ENCODE measurements at regions of chr7 and their contacts with region 1.

Region 1: DNA sequence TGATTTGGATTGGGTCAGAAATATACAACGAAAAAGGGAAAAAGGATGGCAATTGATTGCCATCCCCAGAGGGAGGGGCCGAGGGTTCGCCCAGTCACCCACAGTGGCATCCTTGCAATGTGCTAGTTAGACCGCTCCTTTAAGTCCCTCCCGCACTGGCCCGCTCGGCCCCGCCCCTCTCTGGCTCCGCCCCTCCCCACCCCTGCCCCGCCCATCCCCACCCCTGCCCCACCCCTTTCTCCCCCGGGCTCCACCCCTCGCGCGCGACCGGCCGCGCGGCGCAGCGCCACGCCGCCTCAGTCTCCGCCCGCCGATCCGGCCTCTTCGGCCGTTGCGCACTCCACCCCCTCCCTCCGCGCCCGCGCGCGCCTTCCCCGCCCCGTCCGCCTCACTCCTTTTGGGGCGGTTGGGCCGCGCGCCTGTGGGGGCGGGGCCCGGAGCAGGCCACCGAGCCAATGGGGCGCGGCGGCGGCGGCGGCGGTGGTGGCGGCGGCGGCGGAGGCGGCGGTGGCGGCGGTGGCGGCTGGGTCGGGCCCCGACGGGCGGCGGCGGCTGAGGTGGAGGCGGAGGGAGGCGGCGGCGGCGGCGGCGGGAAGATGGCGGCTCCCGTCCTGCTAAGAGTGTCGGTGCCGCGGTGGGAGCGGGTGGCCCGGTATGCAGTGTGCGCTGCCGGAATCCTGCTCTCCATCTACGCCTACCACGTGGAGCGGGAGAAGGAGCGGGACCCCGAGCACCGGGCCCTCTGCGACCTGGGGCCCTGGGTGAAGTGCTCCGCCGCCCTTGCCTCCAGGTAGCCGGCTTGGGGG is at the start of gene VKORC1L1:
- DNase-seq: peak; percentile 91
- ATAC-seq: peak; percentile 94
- H3K4me3 Mint-ChIP-seq: peak within 1 kb of the TSS; percentile 82
- H3K27ac Mint-ChIP-seq: peak within 1 kb of the TSS; percentile 50
- H3K4me1 Mint-ChIP-seq: peaks cover 8% of the 10 kb centered on the region
- H3K27me3 Mint-ChIP-seq: no peaks in the 10 kb centered on the region
- CTCF ChIP-seq: no peak
- total RNA-seq, gene VKORC1L1: 8.6 and 9.3 TPM in 2 replicates

Region 2: DNA sequence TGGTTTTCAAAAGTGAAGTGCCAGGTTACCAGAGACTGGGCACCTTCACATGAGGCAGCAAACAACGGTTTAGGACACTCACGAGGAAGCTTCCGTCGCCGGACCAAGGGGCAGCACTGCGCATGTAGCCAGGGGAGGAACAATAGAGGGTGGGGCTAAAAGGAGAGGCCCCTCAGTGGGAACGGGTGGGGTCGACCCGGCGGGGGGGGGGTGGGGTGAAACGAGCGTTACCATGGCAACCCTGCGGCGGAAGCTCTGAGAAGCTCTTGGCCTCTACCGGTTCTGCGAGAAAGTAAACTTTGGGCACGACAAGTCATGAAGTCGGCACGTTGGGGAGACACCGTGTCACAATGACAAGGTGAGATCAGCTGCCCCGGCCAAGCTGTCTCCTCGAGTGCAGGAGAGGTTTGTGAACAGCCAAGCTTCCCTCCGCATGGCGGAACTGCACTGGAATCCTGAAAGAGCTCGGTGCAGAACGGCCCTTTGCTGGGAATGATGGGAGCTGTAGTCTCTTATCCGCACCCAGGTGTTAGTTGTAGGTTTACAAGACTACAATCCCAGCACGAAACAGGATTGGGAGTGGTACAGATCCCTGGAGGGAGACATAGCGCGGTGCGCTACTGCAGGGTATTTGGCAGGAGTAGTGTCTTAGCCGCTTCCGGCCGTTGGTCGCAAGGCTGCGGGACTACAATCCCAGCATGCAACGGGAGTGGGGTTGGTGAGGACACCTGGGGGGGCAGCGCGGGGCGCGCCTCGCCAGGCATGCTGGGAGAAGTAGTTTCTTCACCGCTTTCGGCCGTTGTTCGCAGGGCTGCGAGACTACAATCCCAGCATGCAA is 1947.1 kb before region 1 on chr7:
- CTCF ChIA-PET with region 1: no interaction called
- POLR2A ChIA-PET with region 1: no interaction called
- intact Hi-C with region 1: loop called (anchors 5 kb)
- DNase-seq: peak; percentile 63
- ATAC-seq: peak; percentile 89
- H3K4me3 Mint-ChIP-seq: peak overlapping the region; percentile 90
- H3K27ac Mint-ChIP-seq: peak overlapping the region; percentile 93
- H3K4me1 Mint-ChIP-seq: peaks cover 4% of the 10 kb centered on the region
- H3K27me3 Mint-ChIP-seq: no peaks in the 10 kb centered on the region
- CTCF ChIP-seq: no peak

Region 3: DNA sequence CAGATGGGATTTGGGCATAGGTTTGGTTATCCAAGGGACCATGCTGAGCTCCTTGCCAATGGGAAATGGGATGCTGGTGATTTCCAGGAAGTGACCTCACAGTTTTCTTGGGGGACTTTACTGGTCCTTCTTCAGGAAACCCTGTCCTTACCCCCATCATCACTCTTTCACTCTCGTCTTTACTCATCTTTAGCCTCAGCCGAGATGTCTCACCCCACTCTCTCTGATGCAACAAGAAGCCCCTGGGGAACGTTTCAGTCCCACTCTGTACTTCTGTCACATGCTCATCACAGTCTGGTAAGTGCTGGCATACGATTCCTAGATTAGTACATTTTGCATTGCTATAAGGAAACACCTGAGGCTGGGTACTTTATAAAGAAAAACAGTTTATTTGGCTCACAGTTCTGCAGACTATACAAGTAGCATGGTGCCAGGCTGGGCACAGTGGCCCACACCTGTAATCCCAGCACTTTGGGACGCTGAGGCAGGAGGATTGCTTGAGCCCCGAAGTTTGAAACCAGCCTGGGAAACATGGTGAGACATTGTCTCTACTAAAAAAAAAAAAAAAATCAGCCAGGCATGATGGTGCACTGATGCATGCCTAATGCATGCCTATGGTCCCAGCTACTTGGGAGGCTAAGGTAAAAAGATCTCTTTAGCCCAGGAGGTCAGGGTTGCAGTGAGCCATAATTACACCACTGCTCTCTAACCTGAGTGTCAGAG is 63.6 kb before region 1 on chr7:
- CTCF ChIA-PET with region 1: no interaction called
- POLR2A ChIA-PET with region 1: no interaction called
- intact Hi-C with region 1: loop called (anchors 1 kb)
- DNase-seq: no peak
- ATAC-seq: peak; percentile 91
- H3K4me3 Mint-ChIP-seq: peak overlapping the region; percentile 54
- H3K27ac Mint-ChIP-seq: peak overlapping the region; percentile 74
- H3K4me1 Mint-ChIP-seq: peaks cover 13% of the 10 kb centered on the region
- H3K27me3 Mint-ChIP-seq: no peaks in the 10 kb centered on the region
- CTCF ChIP-seq: no peak

Region 4: GRCh38 chr7:65840446-65840845 is 32.5 kb before region 1 on chr7:
- CTCF ChIA-PET with region 1: no interaction called
- POLR2A ChIA-PET with region 1: no interaction called
- intact Hi-C with region 1: no loop called
- DNase-seq: no peak
- ATAC-seq: peak; percentile 52
- H3K4me3 Mint-ChIP-seq: no peak overlapping the region
- H3K27ac Mint-ChIP-seq: no peak overlapping the region
- H3K4me1 Mint-ChIP-seq: no peaks in the 10 kb centered on the region
- H3K27me3 Mint-ChIP-seq: no peaks in the 10 kb centered on the region
- CTCF ChIP-seq: no peak

Region 5: GRCh38 chr7:65981965-65982792 is 109.2 kb after region 1 on chr7 and contains the start of gene GUSB:
- CTCF ChIA-PET with region 1: no interaction called
- POLR2A ChIA-PET with region 1: no interaction called
- intact Hi-C with region 1: loop called (anchors 1 kb)
- DNase-seq: peak; percentile 85
- ATAC-seq: peak; percentile 94
- H3K4me3 Mint-ChIP-seq: peak within 1 kb of the TSS; percentile 79
- H3K27ac Mint-ChIP-seq: peak within 1 kb of the TSS; percentile 46
- H3K4me1 Mint-ChIP-seq: peaks cover 19% of the 10 kb centered on the region
- H3K27me3 Mint-ChIP-seq: no peaks in the 10 kb centered on the region
- CTCF ChIP-seq: no peak
- total RNA-seq, gene GUSB: 33.6 and 40.8 TPM in 2 replicates

Region 6: DNA sequence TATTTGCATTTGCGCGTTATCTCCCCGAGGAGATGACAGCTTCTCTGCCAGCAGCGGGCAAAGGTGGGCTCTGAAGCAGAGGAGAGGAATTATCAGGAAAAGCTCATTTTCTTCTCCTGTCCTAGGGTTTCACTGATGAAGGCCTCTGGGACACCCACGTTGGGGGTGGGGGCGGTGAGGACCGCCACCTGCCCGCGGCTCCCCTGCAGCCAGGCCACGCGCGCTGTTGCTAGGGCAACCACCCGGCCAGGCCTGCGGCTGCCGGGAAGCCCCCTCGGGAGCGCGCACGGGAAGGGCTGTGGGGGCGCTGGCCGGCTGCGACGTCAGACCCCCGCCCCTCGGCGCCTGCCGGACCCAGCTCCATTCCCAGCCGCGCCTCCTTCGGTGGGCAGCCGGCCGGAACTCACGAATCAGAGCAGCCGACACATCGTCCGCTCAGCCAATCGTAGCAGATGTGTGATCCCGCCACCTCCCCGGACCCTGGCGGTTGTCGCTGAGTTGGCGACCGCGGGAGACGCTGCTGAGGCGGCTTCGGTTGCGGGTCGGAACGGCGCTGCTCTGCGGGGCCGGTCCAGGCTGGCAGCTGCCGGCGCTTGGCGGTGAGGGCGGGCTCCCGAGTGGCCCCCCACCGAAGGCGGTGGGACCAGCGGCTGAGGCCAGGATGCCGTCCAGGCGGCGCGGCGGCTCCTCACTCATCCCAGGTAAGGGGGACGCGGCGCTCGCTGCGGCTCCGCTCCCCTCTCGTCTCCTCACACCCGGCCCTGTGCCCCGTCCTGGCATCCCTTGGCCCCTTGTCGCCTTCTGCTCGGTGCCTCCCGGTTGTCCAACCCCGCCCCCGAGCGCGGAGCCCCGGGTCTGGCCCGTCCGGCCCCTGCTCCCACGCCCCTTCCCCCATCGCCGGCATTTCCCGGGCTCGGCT is 332.1 kb after region 1 on chr7 and contains the start of gene TPST1:
- CTCF ChIA-PET with region 1: no interaction called
- POLR2A ChIA-PET with region 1: no interaction called
- intact Hi-C with region 1: loop called (anchors 5 kb)
- DNase-seq: peak; percentile 92
- ATAC-seq: peak; percentile 93
- H3K4me3 Mint-ChIP-seq: peak within 1 kb of the TSS; percentile 94
- H3K27ac Mint-ChIP-seq: peak within 1 kb of the TSS; percentile 85
- H3K4me1 Mint-ChIP-seq: peaks cover 43% of the 10 kb centered on the region
- H3K27me3 Mint-ChIP-seq: peaks cover 11% of the 10 kb centered on the region
- CTCF ChIP-seq: no peak
- total RNA-seq, gene TPST1: 5.6 and 6.5 TPM in 2 replicates

Measured in activated B cell treated with CpG ODN at 0.5 μM for 24 hours (primary cell).